ENCODE measurements at regions of chr3 and their contacts with region 1.

Region 1: GRCh38 chr3:143972505-143973255 is 1.1 kb downstream of the DIPK2A start:
- DNase-seq: peak; percentile 85
- H3K4me3 ChIP-seq: peak overlapping the region; percentile 62 to 98 (median 81)
- H3K27ac ChIP-seq: peak overlapping the region; percentile 90
- H3K4me1 ChIP-seq: peaks cover 27% of the 10 kb centered on the region
- H3K27me3 ChIP-seq: no peaks in the 10 kb centered on the region
- CTCF ChIP-seq: peak; percentile 29 to 52
- POLR2A ChIP-seq: no peak

Region 2: DNA sequence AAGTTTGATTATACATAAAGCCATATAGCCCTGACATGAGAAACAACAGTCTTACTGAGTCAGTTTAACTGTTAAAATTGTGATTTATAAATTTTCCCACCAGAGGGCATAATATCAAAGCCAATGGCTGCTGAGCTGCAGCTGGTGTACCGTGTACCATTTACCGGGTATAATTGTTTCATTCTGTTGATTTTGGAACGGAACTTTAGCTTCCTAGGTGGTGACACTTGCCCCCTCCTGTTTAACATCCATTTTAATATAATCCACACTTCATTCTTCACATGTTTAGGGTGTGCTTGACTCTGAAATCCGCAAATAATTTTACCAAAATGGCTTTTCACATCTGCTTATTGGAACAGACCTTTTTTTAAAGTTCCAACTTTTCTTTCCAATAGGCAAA is 197.2 kb before region 1 on chr3:
- CTCF ChIA-PET with region 1: interaction called, 9 read pairs
- POLR2A ChIA-PET with region 1: no interaction called
- dilution Hi-C with region 1: no loop called
- intact Hi-C with region 1: loop called (anchors 1 kb)
- DNase-seq: peak; percentile 57
- H3K4me3 ChIP-seq: no peak overlapping the region
- H3K27ac ChIP-seq: no peak overlapping the region
- H3K4me1 ChIP-seq: peaks cover 3% of the 10 kb centered on the region
- H3K27me3 ChIP-seq: no peaks in the 10 kb centered on the region
- CTCF ChIP-seq: peak; percentile 32 to 37
- POLR2A ChIP-seq: no peak

Region 3: GRCh38 chr3:143895805-143896204 is 76.9 kb before region 1 on chr3:
- CTCF ChIA-PET with region 1: interaction called, 15 read pairs
- POLR2A ChIA-PET with region 1: interaction called, 3 read pairs
- dilution Hi-C with region 1: no loop called
- intact Hi-C with region 1: no loop called
- DNase-seq: peak; percentile 30
- H3K4me3 ChIP-seq: no peak overlapping the region
- H3K27ac ChIP-seq: no peak overlapping the region
- H3K4me1 ChIP-seq: peaks cover 3% of the 10 kb centered on the region
- H3K27me3 ChIP-seq: no peaks in the 10 kb centered on the region
- CTCF ChIP-seq: no peak
- POLR2A ChIP-seq: no peak

Region 4: DNA sequence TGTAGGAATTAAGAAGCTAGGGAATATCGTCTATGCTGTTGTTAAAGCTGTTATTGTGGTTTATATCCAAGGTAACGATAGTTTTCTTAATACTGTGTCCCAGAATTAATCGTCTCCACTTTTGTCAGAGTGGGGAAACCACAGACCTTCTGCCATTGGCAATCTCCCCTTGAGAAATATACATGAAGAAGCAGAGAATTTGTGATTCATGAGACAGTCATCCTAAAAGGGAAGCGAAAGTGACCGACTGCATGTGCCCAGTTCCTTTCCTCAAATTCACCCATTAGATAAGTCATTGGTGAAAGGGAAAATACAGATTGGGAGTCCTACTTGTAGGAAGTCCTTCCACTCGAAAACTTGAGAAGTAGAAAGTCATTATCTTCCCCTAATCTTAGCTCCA is 25.6 kb after region 1 on chr3:
- CTCF ChIA-PET with region 1: no interaction called
- POLR2A ChIA-PET with region 1: no interaction called
- dilution Hi-C with region 1: no loop called
- intact Hi-C with region 1: no loop called
- DNase-seq: no peak
- H3K4me3 ChIP-seq: no peak overlapping the region
- H3K27ac ChIP-seq: no peak overlapping the region
- H3K4me1 ChIP-seq: peaks cover 3% of the 10 kb centered on the region
- H3K27me3 ChIP-seq: no peaks in the 10 kb centered on the region
- CTCF ChIP-seq: no peak
- POLR2A ChIP-seq: no peak

Region 5: DNA sequence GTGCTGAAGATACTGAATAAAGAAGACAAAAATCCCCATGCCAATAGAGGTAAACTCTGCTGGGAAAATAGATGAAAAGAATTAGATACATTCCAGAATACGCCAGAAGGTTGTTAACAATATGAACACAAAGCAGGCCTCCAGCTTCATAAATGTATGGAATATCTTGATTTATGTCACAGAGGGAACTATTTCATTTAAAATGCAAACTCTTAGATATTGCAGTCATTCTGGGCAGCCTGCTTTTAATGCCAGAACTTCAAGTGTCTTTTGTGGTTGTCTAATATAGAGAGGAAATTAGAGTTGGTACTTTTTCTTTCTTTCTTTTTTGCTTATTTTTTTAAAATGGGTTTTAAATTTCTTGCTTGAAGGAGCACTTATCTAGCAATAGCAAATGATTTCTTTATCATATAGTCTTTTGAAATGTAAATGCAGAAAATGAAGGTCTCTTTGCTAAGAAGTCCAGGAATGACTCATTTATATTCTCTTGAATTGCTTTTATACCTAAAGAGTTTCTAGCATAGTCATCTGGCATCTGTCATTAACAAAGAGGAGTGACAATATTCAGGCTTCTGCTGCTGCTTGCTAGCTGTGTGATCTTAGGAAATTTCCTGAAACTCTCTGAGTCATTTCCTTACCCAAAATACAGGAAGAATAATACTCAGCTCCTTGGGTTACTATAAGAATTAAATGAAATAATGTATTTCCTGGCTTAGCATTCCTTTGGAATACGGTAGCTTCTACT is 526.5 kb after region 1 on chr3:
- CTCF ChIA-PET with region 1: no interaction called
- POLR2A ChIA-PET with region 1: interaction called, 3 read pairs
- dilution Hi-C with region 1: no loop called
- intact Hi-C with region 1: loop called (anchors 2 kb)
- DNase-seq: peak; percentile 72
- H3K4me3 ChIP-seq: no peak overlapping the region
- H3K27ac ChIP-seq: peak overlapping the region; percentile 35
- H3K4me1 ChIP-seq: peaks cover 13% of the 10 kb centered on the region
- H3K27me3 ChIP-seq: no peaks in the 10 kb centered on the region
- CTCF ChIP-seq: no peak
- POLR2A ChIP-seq: no peak

Region 6: GRCh38 chr3:144770915-144771351 is 798.3 kb after region 1 on chr3:
- CTCF ChIA-PET with region 1: interaction called, 43 read pairs
- POLR2A ChIA-PET with region 1: interaction called, 29 read pairs
- dilution Hi-C with region 1: no loop called
- intact Hi-C with region 1: loop called (anchors 1 kb)
- DNase-seq: peak; percentile 93
- H3K4me3 ChIP-seq: no peak overlapping the region
- H3K27ac ChIP-seq: peak overlapping the region; percentile 88
- H3K4me1 ChIP-seq: peaks cover 43% of the 10 kb centered on the region
- H3K27me3 ChIP-seq: no peaks in the 10 kb centered on the region
- CTCF ChIP-seq: peak; percentile 28 to 50
- POLR2A ChIP-seq: peak; percentile 39

Region 7: DNA sequence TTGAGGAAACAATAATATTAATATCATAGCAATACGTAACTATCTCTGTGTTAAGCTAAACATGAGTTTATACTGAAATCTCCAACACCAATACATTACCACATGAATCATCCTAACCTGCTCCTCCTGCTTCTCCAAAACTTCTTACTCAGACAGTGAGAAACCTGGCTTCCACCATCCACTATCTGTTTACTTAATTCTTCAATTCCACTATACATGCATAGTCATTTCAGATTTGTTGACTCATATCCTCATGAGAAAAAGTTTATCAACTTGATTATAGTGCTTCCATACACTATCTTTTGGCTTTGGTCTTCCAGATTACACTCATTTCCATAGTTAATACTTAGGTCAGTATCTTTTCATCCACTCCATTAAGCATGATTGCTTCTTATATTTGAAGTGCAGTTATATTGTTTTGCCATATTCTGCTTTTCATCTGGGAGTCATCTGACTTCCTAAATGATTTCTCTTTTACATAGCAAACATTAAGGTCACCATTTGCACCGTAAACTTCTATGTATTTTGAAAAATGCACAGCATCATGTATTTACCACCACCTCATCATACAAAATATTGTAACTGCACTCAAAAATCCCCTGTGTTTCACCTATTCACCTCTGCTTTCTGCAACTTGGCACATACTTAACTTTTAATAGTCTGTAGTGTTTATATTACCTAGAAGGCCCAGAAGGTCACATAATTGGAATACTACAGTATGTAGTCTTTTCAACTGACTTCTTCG is 969.6 kb after region 1 on chr3:
- CTCF ChIA-PET with region 1: interaction called, 3 read pairs
- POLR2A ChIA-PET with region 1: no interaction called
- dilution Hi-C with region 1: no loop called
- intact Hi-C with region 1: loop called (anchors 5 kb)
- DNase-seq: peak; percentile 59
- H3K4me3 ChIP-seq: no peak overlapping the region
- H3K27ac ChIP-seq: no peak overlapping the region
- H3K4me1 ChIP-seq: peaks cover 2% of the 10 kb centered on the region
- H3K27me3 ChIP-seq: no peaks in the 10 kb centered on the region
- CTCF ChIP-seq: no peak
- POLR2A ChIP-seq: no peak

Region 8: GRCh38 chr3:145767909-145768308 is 1795.2 kb after region 1 on chr3:
- CTCF ChIA-PET with region 1: interaction called, 59 read pairs
- POLR2A ChIA-PET with region 1: interaction called, 8 read pairs
- dilution Hi-C with region 1: no loop called
- intact Hi-C with region 1: loop called (anchors 1 kb)
- DNase-seq: peak; percentile 40
- H3K4me3 ChIP-seq: no peak overlapping the region
- H3K27ac ChIP-seq: no peak overlapping the region
- H3K4me1 ChIP-seq: no peaks in the 10 kb centered on the region
- H3K27me3 ChIP-seq: no peaks in the 10 kb centered on the region
- CTCF ChIP-seq: peak; percentile 12 to 15
- POLR2A ChIP-seq: no peak